Left cardiac atrium (tissue), 4 donors: ENCODE measurements at regions of chrX and their contacts with region 1.

Region 1: GRCh38 chrX:46686003-46686645 is 72.8 kb downstream of the SLC9A7 start:
- DNase-seq: no peak
- ATAC-seq: peak; percentile 32 to 73

Region 2: GRCh38 chrX:46554942-46555341 is 131.2 kb before region 1 on chrX:
- intact Hi-C with region 1: loop called in 1 of 2 experiments (anchors 5 kb)
- DNase-seq: no peak
- ATAC-seq: peak in 1 of 2 donors; percentile 34

Region 3: GRCh38 chrX:46601283-46601682 is 84.8 kb before region 1 on chrX:
- intact Hi-C with region 1: no loop called
- DNase-seq: no peak
- ATAC-seq: peak; percentile 56 to 88